ENCODE measurements at regions of chr2 and their contacts with region 1.

Region 1: GRCh38 chr2:136423516-136423996 is 305.6 kb upstream of the CXCR4 start:
- DNase-seq: peak; percentile 92
- ATAC-seq: peak; percentile 98
- H3K4me3 Mint-ChIP-seq: peak overlapping the region; percentile 72
- H3K27ac Mint-ChIP-seq: peak overlapping the region; percentile 18
- H3K4me1 Mint-ChIP-seq: peaks cover 20% of the 10 kb centered on the region
- H3K27me3 Mint-ChIP-seq: peaks cover 30% of the 10 kb centered on the region
- CTCF ChIP-seq: peak; percentile 93

Region 2: DNA sequence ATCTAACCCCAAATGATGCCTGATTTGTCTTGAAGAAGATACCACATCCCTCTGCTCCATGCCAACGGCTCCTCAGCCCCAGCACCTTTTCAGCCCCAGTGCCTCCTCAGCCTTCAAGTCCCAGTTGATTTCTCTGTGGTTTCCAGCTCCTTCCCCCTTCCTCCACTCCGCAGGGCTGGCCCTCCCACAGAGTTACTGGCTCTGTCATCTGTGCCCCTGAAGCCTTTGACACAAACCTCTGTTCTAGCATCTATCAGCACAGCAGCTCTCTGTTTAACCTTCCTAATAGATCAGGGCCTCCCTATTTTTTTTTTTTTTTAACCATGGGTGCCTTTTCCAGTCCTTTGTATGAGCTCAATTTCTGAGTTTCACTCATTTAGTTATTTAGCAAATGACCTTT is 104.3 kb before region 1 on chr2:
- CTCF ChIA-PET with region 1: no interaction called
- POLR2A ChIA-PET with region 1: no interaction called
- intact Hi-C with region 1: no loop called
- DNase-seq: peak; percentile 43
- ATAC-seq: peak; percentile 49
- H3K4me3 Mint-ChIP-seq: no peak overlapping the region
- H3K27ac Mint-ChIP-seq: no peak overlapping the region
- H3K4me1 Mint-ChIP-seq: peaks cover 42% of the 10 kb centered on the region
- H3K27me3 Mint-ChIP-seq: peaks cover 2% of the 10 kb centered on the region
- CTCF ChIP-seq: no peak

Region 3: DNA sequence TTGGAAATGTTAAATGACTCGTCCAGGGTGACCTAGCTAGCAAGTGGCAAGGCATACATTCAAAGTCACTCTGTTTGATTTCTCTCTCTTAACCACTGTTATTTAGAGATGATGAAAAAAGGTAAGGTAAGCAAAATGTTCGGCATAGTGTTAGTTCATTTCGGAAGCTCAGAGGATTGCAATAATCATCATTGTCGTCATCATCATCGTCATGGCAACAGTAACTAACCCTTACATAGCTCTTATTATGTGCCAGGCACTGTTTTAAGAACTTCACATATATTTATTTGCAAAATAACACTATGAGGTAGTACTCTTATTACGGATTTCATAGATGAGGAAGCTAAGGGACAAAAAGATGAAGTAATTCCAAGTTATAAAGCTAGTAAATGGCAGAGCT is 12.9 kb before region 1 on chr2:
- CTCF ChIA-PET with region 1: interaction called, 14 read pairs
- POLR2A ChIA-PET with region 1: no interaction called
- intact Hi-C with region 1: no loop called
- DNase-seq: no peak
- ATAC-seq: no peak
- H3K4me3 Mint-ChIP-seq: no peak overlapping the region
- H3K27ac Mint-ChIP-seq: no peak overlapping the region
- H3K4me1 Mint-ChIP-seq: no peaks in the 10 kb centered on the region
- H3K27me3 Mint-ChIP-seq: peaks cover 4% of the 10 kb centered on the region
- CTCF ChIP-seq: no peak

Region 4: DNA sequence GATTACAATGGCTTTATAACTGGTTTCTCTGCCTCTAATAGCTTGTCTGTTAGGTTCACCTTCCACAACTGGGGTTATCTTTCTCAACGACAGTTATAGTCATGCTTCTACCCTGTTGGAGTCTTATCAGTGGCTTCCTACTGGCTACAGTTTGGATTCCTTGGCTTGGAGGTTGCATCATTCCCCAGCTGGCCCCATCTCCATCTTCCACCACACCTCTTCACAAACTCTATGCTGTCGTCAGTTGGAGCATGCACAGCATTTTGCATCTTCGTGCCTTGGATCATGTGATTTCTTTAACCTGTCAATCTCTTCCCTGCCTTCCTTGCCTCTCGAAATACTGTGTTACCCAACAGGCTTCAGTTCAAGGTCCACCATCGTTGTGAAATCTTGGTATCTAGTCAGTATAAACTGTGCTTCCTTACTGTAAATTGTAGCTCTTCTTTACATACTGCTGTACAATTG is 10.7 kb after region 1 on chr2:
- CTCF ChIA-PET with region 1: interaction called, 11 read pairs
- POLR2A ChIA-PET with region 1: no interaction called
- intact Hi-C with region 1: no loop called
- DNase-seq: no peak
- ATAC-seq: no peak
- H3K4me3 Mint-ChIP-seq: no peak overlapping the region
- H3K27ac Mint-ChIP-seq: no peak overlapping the region
- H3K4me1 Mint-ChIP-seq: no peaks in the 10 kb centered on the region
- H3K27me3 Mint-ChIP-seq: peaks cover 2% of the 10 kb centered on the region
- CTCF ChIP-seq: no peak

Region 5: DNA sequence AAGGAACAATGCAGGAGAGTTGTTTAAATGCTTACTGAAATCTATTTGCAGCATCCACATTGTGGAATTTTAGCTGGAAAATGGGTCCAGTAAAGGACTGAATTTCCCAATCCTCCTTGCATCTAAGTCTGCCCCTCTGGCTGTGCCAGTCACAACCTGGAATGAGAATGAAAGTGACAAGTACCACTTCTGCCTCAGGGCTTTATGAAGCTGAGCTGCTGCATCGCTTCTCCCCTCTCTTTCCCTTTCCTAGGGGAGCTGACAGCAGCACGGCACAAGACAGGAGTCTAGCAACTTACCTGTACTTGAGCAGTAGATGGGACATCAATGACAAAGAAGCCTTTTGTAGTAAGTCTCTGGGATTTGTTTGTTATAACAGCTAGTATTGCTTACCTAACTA is 314.5 kb after region 1 on chr2:
- CTCF ChIA-PET with region 1: interaction called, 4 read pairs
- POLR2A ChIA-PET with region 1: no interaction called
- intact Hi-C with region 1: loop called (anchors 10 kb)
- DNase-seq: no peak
- ATAC-seq: no peak
- H3K4me3 Mint-ChIP-seq: no peak overlapping the region
- H3K27ac Mint-ChIP-seq: no peak overlapping the region
- H3K4me1 Mint-ChIP-seq: no peaks in the 10 kb centered on the region
- H3K27me3 Mint-ChIP-seq: peaks cover 5% of the 10 kb centered on the region
- CTCF ChIP-seq: no peak

Region 6: DNA sequence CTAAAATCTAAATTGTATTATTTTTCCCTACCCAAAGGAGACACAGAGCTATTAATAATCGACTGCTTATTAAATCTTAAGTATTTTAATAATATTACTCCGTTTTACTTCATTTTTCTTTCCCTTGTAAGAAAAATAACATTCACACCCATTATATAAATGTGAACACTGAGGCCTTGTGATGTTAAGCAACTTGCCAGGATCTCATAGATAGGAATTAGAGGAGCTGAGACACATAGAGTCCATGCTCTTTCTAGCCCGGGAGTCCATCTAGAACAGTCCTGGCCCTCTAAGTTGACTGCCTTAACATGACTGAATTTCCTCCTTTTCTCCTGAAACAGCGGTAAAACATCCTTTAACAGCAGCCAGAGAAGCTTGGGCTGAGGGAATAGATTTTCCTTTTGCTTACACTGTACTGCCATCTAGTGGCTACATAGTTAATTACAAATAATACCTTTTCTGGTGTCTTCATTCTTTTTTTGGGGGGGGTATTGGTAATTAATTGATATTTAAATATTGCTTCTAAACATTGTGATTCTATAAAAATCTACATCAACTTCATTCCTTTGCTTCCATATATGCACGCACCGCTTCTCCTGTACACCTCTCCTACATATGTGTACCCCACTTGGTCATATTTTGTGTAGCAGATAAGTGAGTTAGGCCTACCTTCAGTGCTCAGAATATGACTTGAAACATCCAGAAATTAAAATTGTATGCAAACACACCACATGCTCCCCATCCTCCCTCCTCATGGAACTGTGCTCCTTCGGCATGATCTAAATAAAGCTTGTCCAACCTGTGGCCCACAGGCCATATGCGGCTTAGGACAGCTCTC is 1414.9 kb after region 1 on chr2:
- CTCF ChIA-PET with region 1: interaction called, 3 read pairs
- POLR2A ChIA-PET with region 1: no interaction called
- intact Hi-C with region 1: loop called (anchors 10 kb)
- DNase-seq: no peak
- ATAC-seq: no peak
- H3K4me3 Mint-ChIP-seq: no peak overlapping the region
- H3K27ac Mint-ChIP-seq: no peak overlapping the region
- H3K4me1 Mint-ChIP-seq: no peaks in the 10 kb centered on the region
- H3K27me3 Mint-ChIP-seq: peaks cover 7% of the 10 kb centered on the region
- CTCF ChIP-seq: peak; percentile 77